CD14-positive monocyte (primary cell): ENCODE measurements at regions of chr10 and their contacts with region 1.

Region 1: DNA sequence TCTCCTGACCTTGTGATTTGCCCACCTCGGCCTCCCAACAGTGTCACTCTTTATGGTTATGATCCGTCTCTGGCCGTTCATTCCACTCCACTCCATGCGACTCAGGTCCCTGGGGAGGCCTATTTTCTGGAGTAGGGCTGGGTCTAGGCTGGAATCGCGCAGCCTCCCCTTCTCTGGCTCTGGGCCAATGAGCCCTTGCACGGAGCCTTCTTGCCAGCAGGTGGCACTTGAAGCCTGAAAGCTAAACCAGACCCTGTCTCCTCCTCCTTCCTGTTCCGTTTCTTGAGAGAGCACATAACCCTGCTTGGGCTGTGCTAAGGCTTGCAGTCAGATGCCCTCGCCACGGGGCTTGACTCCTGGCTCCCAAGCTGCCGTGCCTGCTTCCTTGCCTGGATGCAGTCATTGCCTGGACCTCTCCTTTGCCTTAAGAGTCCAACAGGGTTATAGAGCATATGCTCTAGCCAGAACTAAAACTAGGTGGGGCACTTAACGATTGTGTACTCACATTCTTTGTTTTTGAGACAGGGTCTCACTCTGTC is 9.6 kb upstream of the DNAJB12 start:
- DNase-seq: peak; percentile 80 to 87 (median 85)
- H3K4me3 ChIP-seq: peak overlapping the region in 1 of 3 experiments; percentile 18
- H3K4me3 Mint-ChIP-seq: peak overlapping the region in 1 of 2 donors; percentile 65
- H3K27ac ChIP-seq: peak overlapping the region; percentile 26 to 60
- H3K27ac Mint-ChIP-seq: peak overlapping the region in 5 of 7 donors; percentile 22 to 77 (median 56)
- H3K4me1 ChIP-seq: peaks cover 10 to 11% of the 10 kb centered on the region in 2 donors
- H3K4me1 Mint-ChIP-seq: peaks cover 15% of the 10 kb centered on the region
- H3K27me3 ChIP-seq: no peaks in the 10 kb centered on the region
- H3K27me3 Mint-ChIP-seq: no peaks in the 10 kb centered on the region
- CTCF ChIP-seq: peak; percentile 83

Region 2: DNA sequence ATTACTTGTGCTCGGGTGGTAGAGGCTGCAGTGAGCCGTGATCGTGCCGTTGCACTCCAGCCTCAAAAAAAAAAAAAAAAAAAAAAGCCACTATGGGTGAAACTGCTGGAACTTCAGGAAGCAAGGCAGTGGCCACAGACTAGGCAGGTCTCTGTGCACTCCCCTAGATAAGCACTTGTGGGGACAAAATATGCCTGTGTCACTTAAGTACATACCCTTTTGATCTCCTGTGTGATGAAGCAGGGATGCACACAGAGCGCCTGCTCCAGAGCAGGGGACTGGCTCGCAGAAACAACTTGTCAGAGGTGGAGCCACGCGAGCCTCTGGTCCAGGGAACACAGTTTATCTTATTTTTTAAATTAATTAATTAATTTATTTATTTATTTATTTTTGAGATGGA is 470.4 kb before region 1 on chr10:
- intact Hi-C with region 1: no loop called
- DNase-seq: no peak
- H3K4me3 ChIP-seq: no peak overlapping the region
- H3K4me3 Mint-ChIP-seq: no peak overlapping the region
- H3K27ac ChIP-seq: no peak overlapping the region
- H3K27ac Mint-ChIP-seq: peak overlapping the region in 6 of 7 donors; percentile 35 to 100 (median 80)
- H3K4me1 ChIP-seq: peaks cover 77% of the 10 kb centered on the region in 2 donors
- H3K4me1 Mint-ChIP-seq: peaks cover 69% of the 10 kb centered on the region
- H3K27me3 ChIP-seq: no peaks in the 10 kb centered on the region
- H3K27me3 Mint-ChIP-seq: peaks cover 0 to 9% (median 0%) of the 10 kb centered on the region in 3 donors
- CTCF ChIP-seq: no peak

Region 3: GRCh38 chr10:72254813-72255568 is 109.3 kb before region 1 on chr10:
- intact Hi-C with region 1: no loop called
- DNase-seq: peak; percentile 64 to 70 (median 69)
- H3K4me3 ChIP-seq: peak overlapping the region in 1 of 3 experiments; percentile 69
- H3K4me3 Mint-ChIP-seq: peak overlapping the region; percentile 71 to 84
- H3K27ac ChIP-seq: peak overlapping the region in 1 of 2 donors; percentile 31
- H3K27ac Mint-ChIP-seq: peak overlapping the region in 4 of 7 donors; percentile 43 to 79 (median 78)
- H3K4me1 ChIP-seq: peaks cover 39 to 44% of the 10 kb centered on the region in 2 donors
- H3K4me1 Mint-ChIP-seq: peaks cover 37% of the 10 kb centered on the region
- H3K27me3 ChIP-seq: no peaks in the 10 kb centered on the region
- H3K27me3 Mint-ChIP-seq: peaks cover 1 to 2% (median 2%) of the 10 kb centered on the region in 3 donors
- CTCF ChIP-seq: no peak

Region 4: GRCh38 chr10:72308320-72308987 is 55.9 kb before region 1 on chr10:
- intact Hi-C with region 1: no loop called
- DNase-seq: peak; percentile 85 to 95 (median 93)
- H3K4me3 ChIP-seq: no peak overlapping the region
- H3K4me3 Mint-ChIP-seq: peak overlapping the region in 1 of 2 donors; percentile 13
- H3K27ac ChIP-seq: peak overlapping the region in 1 of 2 donors; percentile 19
- H3K27ac Mint-ChIP-seq: peak overlapping the region; percentile 9 to 87 (median 75)
- H3K4me1 ChIP-seq: peaks cover 31 to 35% of the 10 kb centered on the region in 2 donors
- H3K4me1 Mint-ChIP-seq: peaks cover 32% of the 10 kb centered on the region
- H3K27me3 ChIP-seq: no peaks in the 10 kb centered on the region
- H3K27me3 Mint-ChIP-seq: peaks cover 2 to 12% (median 2%) of the 10 kb centered on the region in 3 donors
- CTCF ChIP-seq: no peak

Region 5: GRCh38 chr10:72483471-72483870 is 119.2 kb after region 1 on chr10:
- intact Hi-C with region 1: no loop called
- DNase-seq: peak; percentile 37 to 40 (median 39)
- H3K4me3 ChIP-seq: peak overlapping the region in 2 of 3 experiments; percentile 14 to 57
- H3K4me3 Mint-ChIP-seq: peak overlapping the region; percentile 45 to 77
- H3K27ac ChIP-seq: peak overlapping the region; percentile 50 to 76
- H3K27ac Mint-ChIP-seq: peak overlapping the region; percentile 73 to 94 (median 87)
- H3K4me1 ChIP-seq: peaks cover 16 to 20% of the 10 kb centered on the region in 2 donors
- H3K4me1 Mint-ChIP-seq: peaks cover 35% of the 10 kb centered on the region
- H3K27me3 ChIP-seq: no peaks in the 10 kb centered on the region
- H3K27me3 Mint-ChIP-seq: no peaks in the 10 kb centered on the region
- CTCF ChIP-seq: no peak

Region 6: GRCh38 chr10:72567884-72568640 is 203.8 kb after region 1 on chr10:
- intact Hi-C with region 1: loop called in 1 of 2 experiments (anchors 10 kb)
- DNase-seq: peak in 2 of 3 donors; percentile 15 to 28
- H3K4me3 ChIP-seq: no peak overlapping the region
- H3K4me3 Mint-ChIP-seq: no peak overlapping the region
- H3K27ac ChIP-seq: peak overlapping the region in 1 of 2 donors; percentile 52
- H3K27ac Mint-ChIP-seq: peak overlapping the region in 6 of 7 donors; percentile 26 to 77 (median 44)
- H3K4me1 ChIP-seq: peaks cover 26 to 34% of the 10 kb centered on the region in 2 donors
- H3K4me1 Mint-ChIP-seq: peaks cover 32% of the 10 kb centered on the region
- H3K27me3 ChIP-seq: no peaks in the 10 kb centered on the region
- H3K27me3 Mint-ChIP-seq: peaks cover 0 to 2% (median 0%) of the 10 kb centered on the region in 3 donors
- CTCF ChIP-seq: peak; percentile 54

Region 7: DNA sequence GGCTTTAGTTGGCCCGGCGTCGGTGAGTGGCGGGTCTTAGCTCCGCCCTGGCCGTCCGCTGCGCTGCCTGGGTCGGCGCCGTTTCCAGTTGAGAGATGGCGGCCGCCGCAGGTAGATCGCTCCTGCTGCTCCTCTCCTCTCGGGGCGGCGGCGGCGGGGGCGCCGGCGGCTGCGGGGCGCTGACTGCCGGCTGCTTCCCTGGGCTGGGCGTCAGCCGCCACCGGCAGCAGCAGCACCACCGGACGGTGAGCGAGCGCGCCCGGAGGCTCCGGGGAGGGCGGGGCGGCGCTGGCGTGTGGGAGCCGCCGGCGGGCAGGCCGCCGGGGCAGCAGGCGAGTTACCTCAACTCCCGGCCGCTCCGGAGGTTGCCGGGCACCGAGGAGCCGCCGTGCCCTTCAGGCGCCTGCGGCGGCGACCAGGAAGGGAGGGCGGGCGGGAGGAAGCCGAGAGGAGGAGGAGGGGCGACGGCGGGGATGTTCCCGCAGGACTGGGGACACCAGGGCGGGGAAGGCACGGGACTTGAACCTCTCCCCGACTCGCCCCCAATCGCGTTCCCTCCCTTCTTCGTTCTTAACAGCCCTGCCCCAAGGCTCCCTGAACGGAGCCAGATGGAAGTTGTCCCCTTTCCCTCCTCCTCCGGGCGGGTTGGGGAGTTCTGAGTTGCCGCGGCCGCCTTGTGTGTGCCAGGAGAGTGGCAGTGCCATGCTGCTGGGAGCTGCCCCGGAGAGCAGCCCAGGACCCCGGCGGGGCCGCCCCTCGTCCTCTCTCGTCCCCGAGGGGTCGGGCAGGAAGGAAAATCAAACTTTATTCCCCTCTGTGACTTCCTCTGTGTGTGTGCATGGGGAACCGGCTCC is 328.0 kb after region 1 on chr10 and contains the start of gene MCU:
- intact Hi-C with region 1: loop called (anchors 10 kb)
- DNase-seq: peak; percentile 85 to 92 (median 88)
- H3K4me3 ChIP-seq: peak within 1 kb of the TSS; percentile 63 to 95 (median 83)
- H3K4me3 Mint-ChIP-seq: peak within 1 kb of the TSS; percentile 84 to 96
- H3K27ac ChIP-seq: peak within 1 kb of the TSS; percentile 71 to 72
- H3K27ac Mint-ChIP-seq: peak within 1 kb of the TSS in 5 of 7 donors; percentile 66 to 88 (median 81)
- H3K4me1 ChIP-seq: peaks cover 43 to 46% of the 10 kb centered on the region in 2 donors
- H3K4me1 Mint-ChIP-seq: peaks cover 46% of the 10 kb centered on the region
- H3K27me3 ChIP-seq: no peaks in the 10 kb centered on the region
- H3K27me3 Mint-ChIP-seq: peaks cover 0 to 1% (median 0%) of the 10 kb centered on the region in 3 donors
- CTCF ChIP-seq: no peak
- polyA plus RNA-seq, gene MCU: 11.7 to 23.1 (median 16.5) TPM

Region 8: GRCh38 chr10:72834183-72834825 is 470.0 kb after region 1 on chr10:
- intact Hi-C with region 1: loop called (anchors 2 to 5 kb)
- DNase-seq: peak; percentile 27 to 46 (median 41)
- H3K4me3 ChIP-seq: no peak overlapping the region
- H3K4me3 Mint-ChIP-seq: no peak overlapping the region
- H3K27ac ChIP-seq: no peak overlapping the region
- H3K27ac Mint-ChIP-seq: no peak overlapping the region
- H3K4me1 ChIP-seq: no peaks in the 10 kb centered on the region
- H3K4me1 Mint-ChIP-seq: peaks cover 1% of the 10 kb centered on the region
- H3K27me3 ChIP-seq: no peaks in the 10 kb centered on the region
- H3K27me3 Mint-ChIP-seq: no peaks in the 10 kb centered on the region
- CTCF ChIP-seq: peak; percentile 59

Region 9: GRCh38 chr10:73060738-73061635 is 696.7 kb after region 1 on chr10:
- intact Hi-C with region 1: loop called in 1 of 2 experiments (anchors 10 kb)
- DNase-seq: peak in 1 of 3 donors; percentile 2
- H3K4me3 ChIP-seq: no peak overlapping the region
- H3K4me3 Mint-ChIP-seq: no peak overlapping the region
- H3K27ac ChIP-seq: no peak overlapping the region
- H3K27ac Mint-ChIP-seq: no peak overlapping the region
- H3K4me1 ChIP-seq: no peaks in the 10 kb centered on the region
- H3K4me1 Mint-ChIP-seq: no peaks in the 10 kb centered on the region
- H3K27me3 ChIP-seq: no peaks in the 10 kb centered on the region
- H3K27me3 Mint-ChIP-seq: no peaks in the 10 kb centered on the region
- CTCF ChIP-seq: peak; percentile 37